HepG2 (cell line): ENCODE measurements at regions of chr12 and their contacts with region 1.

Region 1: GRCh38 chr12:5371631-5372030 is 60.3 kb upstream of the NTF3 start:
- DNase-seq: no peak
- ATAC-seq: no peak
- H3K4me3 ChIP-seq: no peak overlapping the region
- H3K27ac ChIP-seq: no peak overlapping the region
- H3K4me1 ChIP-seq: no peaks in the 10 kb centered on the region
- H3K27me3 ChIP-seq: peaks cover 0 to 4% of the 10 kb centered on the region in 2 experiments; a peak in 1 of 5 replicates
- CTCF ChIP-seq: no peak
- EP300 ChIP-seq: no peak
- POLR2A ChIP-seq: no peak
- RAD21 ChIP-seq: no peak

Region 2: DNA sequence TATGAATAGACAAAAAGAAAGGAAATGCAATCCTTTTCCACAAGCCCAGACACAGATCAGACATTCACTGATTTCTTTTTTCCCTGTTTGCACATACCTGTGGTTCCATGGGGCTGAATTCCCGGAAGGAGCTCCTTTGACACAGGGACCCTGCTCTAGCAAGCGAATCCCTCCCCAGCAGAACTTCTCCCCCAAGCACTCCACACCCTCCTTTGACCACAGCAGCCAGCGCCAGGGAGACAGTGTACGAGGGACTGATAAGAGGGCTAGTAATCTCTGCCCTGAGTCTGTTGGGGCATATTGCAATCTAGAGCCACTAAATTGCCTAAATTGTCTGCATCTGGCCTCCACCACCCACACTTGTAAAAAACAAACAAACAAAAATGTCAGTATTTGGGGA is 23.1 kb before region 1 on chr12:
- CTCF ChIA-PET with region 1: no interaction called
- POLR2A ChIA-PET with region 1: no interaction called
- in situ Hi-C with region 1: no loop called
- intact Hi-C with region 1: loop called (anchors 1 kb)
- DNase-seq: no peak
- ATAC-seq: no peak
- H3K4me3 ChIP-seq: no peak overlapping the region
- H3K27ac ChIP-seq: no peak overlapping the region
- H3K4me1 ChIP-seq: no peaks in the 10 kb centered on the region
- H3K27me3 ChIP-seq: no peaks in the 10 kb centered on the region
- CTCF ChIP-seq: no peak
- EP300 ChIP-seq: no peak
- POLR2A ChIP-seq: no peak
- RAD21 ChIP-seq: no peak